Ovary (tissue), 10 donors: ENCODE measurements at regions of chr15 and their contacts with region 1.

Region 1: DNA sequence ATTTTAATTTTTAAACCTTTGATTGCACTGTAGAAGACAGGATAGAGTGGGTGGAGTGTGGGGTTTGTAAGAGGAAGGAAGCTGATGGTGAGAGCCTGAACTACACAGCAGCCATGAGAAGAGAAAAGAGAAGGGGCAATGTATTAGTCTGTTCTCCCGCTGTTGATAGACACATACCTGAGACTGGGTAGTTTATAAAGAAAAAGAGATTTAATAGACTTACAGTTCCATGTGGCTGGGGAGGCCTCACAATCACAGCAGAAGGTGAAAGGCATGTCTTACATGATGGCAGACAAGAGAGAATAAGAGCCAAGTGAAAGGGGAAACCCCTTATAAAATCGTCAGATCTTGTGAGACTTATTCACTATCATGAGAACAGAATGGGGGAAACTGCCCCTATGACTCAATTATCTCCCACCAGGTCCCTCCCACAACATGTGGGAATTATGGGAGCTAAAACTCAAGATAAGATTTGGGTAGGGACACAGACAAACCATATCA is 37.3 kb downstream of the STARD5 start:
- DNase-seq: no peak
- H3K4me3 ChIP-seq: no peak overlapping the region
- H3K27ac ChIP-seq: no peak overlapping the region
- H3K4me1 ChIP-seq: no peaks in the 10 kb centered on the region
- H3K27me3 ChIP-seq: no peaks in the 10 kb centered on the region
- CTCF ChIP-seq: no peak
- EP300 ChIP-seq: no peak
- POLR2A ChIP-seq: no peak

Region 2: GRCh38 chr15:81229586-81229985 is 57.1 kb before region 1 on chr15:
- intact Hi-C with region 1: no loop called
- DNase-seq: peak in 2 of 5 donors; percentile 38 to 44
- H3K4me3 ChIP-seq: no peak overlapping the region
- H3K27ac ChIP-seq: no peak overlapping the region
- H3K4me1 ChIP-seq: peaks cover 3% of the 10 kb centered on the region
- H3K27me3 ChIP-seq: no peaks in the 10 kb centered on the region
- CTCF ChIP-seq: no peak
- EP300 ChIP-seq: no peak
- POLR2A ChIP-seq: no peak

Region 3: DNA sequence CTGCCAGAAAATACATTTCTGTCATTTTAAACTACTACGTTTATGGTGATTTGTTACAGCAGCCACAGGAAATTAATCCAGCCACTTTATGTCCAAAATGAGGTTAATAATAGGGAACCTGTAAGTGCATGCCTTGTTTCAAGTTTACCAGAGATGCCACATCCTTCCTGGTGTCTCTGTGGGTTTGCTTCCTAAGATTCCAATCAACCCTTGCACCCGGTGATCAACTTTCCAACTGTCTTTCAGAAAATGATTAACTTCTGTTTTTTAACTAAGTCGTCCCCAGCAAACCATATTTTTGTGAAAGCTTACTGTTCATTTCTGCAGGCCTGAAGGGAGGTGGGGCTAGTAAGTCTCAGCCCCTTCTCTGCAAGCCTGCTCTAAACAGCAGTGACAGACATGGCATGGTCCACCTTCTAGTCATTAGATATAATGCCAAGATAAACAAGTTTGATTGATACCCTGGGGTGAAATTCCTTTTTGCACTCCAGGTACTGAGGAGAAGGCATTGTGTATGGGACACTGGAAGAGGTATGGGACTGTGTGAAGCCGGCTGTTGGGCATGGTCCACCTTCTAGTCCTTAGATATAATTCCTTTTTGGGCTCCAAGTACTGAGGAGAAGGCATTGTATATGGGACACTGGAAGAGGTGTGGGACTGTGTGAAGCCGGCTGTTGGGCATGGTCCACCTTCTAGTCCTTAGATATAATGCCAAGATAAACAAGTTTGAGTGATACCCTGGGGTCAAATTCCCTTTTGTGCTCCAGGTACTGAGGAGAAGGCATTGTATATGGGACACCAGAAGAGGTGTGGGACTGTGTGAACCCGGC is 98.4 kb after region 1 on chr15:
- intact Hi-C with region 1: loop called in 1 of 4 experiments (anchors 10 kb)
- DNase-seq: no peak
- H3K4me3 ChIP-seq: no peak overlapping the region
- H3K27ac ChIP-seq: no peak overlapping the region
- H3K4me1 ChIP-seq: no peaks in the 10 kb centered on the region
- H3K27me3 ChIP-seq: no peaks in the 10 kb centered on the region
- CTCF ChIP-seq: no peak
- EP300 ChIP-seq: no peak
- POLR2A ChIP-seq: no peak